ENCODE measurements at regions of chr12 and their contacts with region 1.

Region 1: DNA sequence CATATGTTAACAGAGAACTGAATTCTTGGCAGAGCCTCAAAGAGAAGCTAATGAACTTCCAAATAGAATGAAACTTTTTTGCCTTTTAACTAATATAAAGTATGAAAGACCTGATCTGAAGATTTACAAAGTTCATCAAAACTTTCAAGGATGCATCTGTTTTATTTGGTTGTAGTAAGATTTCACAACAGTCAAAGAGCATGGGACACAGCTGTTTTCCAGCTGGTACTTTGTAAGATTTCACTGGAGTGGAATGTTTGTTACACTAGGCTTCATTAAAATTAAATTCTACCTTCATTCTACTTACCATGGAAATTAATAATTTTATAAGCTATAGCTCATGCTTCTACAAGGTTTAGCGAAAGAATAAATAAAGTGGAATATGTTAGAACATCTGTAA is 351.2 kb downstream of the SLC6A15 start:
- DNase-seq: no peak
- H3K4me3 ChIP-seq: no peak overlapping the region
- H3K27ac ChIP-seq: no peak overlapping the region
- H3K4me1 ChIP-seq: no peaks in the 10 kb centered on the region
- H3K27me3 ChIP-seq: no peaks in the 10 kb centered on the region
- CTCF ChIP-seq: no peak
- POLR2A ChIP-seq: no peak

Region 2: GRCh38 chr12:84512751-84513150 is 48.6 kb before region 1 on chr12:
- intact Hi-C with region 1: loop called (anchors 2 kb)
- DNase-seq: no peak
- H3K4me3 ChIP-seq: no peak overlapping the region
- H3K27ac ChIP-seq: no peak overlapping the region
- H3K4me1 ChIP-seq: no peaks in the 10 kb centered on the region
- H3K27me3 ChIP-seq: no peaks in the 10 kb centered on the region
- CTCF ChIP-seq: no peak
- POLR2A ChIP-seq: no peak

Region 3: GRCh38 chr12:84627593-84627992 is 66.2 kb after region 1 on chr12:
- intact Hi-C with region 1: no loop called
- DNase-seq: no peak
- H3K4me3 ChIP-seq: no peak overlapping the region
- H3K27ac ChIP-seq: no peak overlapping the region
- H3K4me1 ChIP-seq: no peaks in the 10 kb centered on the region
- H3K27me3 ChIP-seq: no peaks in the 10 kb centered on the region
- CTCF ChIP-seq: no peak
- POLR2A ChIP-seq: no peak